Activated CD4-positive, alpha-beta T cell treated with anti-CD3 and anti-CD28 coated beads for 36 hours (primary cell): ENCODE measurements at regions of chr6 and their contacts with region 1.

Region 1: DNA sequence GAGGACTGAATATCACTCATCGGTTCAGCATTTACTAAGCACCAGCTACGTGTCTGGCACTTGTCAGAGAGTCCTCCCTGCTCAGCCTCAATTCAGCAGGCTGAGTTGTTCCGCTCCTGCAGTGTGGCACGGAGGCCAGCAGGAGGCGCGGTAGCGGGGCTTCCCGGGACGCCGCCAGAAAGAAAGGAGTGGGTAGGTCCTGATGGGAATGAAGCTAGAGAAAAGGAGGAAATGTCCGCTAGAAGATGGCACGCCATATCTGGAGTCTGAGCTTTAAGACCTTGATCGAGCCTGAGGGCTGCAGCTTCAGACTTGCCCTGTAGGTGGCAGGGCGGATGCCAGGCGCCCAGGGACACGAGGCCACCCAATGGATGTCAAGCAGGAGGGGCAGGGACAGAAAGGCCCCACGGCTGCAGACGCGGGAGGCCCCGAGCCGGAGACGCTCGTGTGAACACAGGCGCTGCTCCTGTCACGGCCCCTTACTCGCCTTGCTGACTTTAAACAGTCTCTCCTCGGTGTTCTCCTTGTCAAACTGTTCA is 18.7 kb downstream of the SERPINB6 start:
- DNase-seq: peak; percentile 80
- ATAC-seq: peak; percentile 97
- H3K4me3 Mint-ChIP-seq: peak overlapping the region; percentile 46
- H3K27ac Mint-ChIP-seq: peak overlapping the region; percentile 74
- H3K4me1 Mint-ChIP-seq: peaks cover 15% of the 10 kb centered on the region
- H3K27me3 Mint-ChIP-seq: no peaks in the 10 kb centered on the region

Region 2: GRCh38 chr6:2900821-2901644 is 51.6 kb before region 1 on chr6:
- CTCF ChIA-PET with region 1: interaction called, 10 read pairs
- POLR2A ChIA-PET with region 1: no interaction called
- intact Hi-C with region 1: no loop called
- DNase-seq: peak; percentile 26
- ATAC-seq: no peak
- H3K4me3 Mint-ChIP-seq: peak overlapping the region; percentile 91
- H3K27ac Mint-ChIP-seq: peak overlapping the region; percentile 93
- H3K4me1 Mint-ChIP-seq: peaks cover 45% of the 10 kb centered on the region
- H3K27me3 Mint-ChIP-seq: no peaks in the 10 kb centered on the region

Region 3: GRCh38 chr6:2966347-2966746 is 13.7 kb after region 1 on chr6:
- CTCF ChIA-PET with region 1: interaction called, 11 read pairs
- POLR2A ChIA-PET with region 1: no interaction called
- intact Hi-C with region 1: no loop called
- DNase-seq: no peak
- ATAC-seq: no peak
- H3K4me3 Mint-ChIP-seq: no peak overlapping the region
- H3K27ac Mint-ChIP-seq: no peak overlapping the region
- H3K4me1 Mint-ChIP-seq: peaks cover 15% of the 10 kb centered on the region
- H3K27me3 Mint-ChIP-seq: peaks cover 13% of the 10 kb centered on the region

Region 4: DNA sequence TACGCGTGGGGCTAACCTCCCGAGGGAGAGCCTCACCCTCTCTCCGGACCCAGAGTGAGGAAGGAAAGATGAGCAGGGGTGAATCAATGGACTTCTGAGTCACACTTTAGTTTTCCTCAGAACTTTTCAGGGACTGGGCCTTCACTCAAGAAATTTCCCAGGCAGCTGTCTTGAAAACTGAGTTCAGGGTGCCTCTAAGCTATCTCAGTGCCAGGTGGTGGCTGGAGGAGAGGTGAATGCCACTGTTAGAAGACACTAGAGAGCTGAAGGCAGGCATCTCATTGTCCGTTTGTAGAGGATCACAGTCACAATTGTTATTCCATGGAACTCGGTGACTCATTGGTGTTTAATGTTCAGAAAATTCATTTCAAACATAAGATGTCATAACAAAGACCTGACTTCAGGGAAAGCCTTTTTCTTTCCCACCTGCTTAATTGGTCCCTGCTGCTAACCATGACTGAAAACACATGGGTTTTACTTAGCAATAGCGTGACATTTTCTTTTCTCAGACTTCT is 24.0 kb after region 1 on chr6:
- CTCF ChIA-PET with region 1: interaction called, 28 read pairs
- POLR2A ChIA-PET with region 1: no interaction called
- intact Hi-C with region 1: no loop called
- DNase-seq: peak; percentile 22
- ATAC-seq: peak; percentile 54
- H3K4me3 Mint-ChIP-seq: no peak overlapping the region
- H3K27ac Mint-ChIP-seq: peak overlapping the region; percentile 91
- H3K4me1 Mint-ChIP-seq: peaks cover 38% of the 10 kb centered on the region
- H3K27me3 Mint-ChIP-seq: peaks cover 29% of the 10 kb centered on the region